CD4-positive, alpha-beta memory T cell (primary cell): ENCODE measurements at regions of chr11 and their contacts with region 1.

Region 1: DNA sequence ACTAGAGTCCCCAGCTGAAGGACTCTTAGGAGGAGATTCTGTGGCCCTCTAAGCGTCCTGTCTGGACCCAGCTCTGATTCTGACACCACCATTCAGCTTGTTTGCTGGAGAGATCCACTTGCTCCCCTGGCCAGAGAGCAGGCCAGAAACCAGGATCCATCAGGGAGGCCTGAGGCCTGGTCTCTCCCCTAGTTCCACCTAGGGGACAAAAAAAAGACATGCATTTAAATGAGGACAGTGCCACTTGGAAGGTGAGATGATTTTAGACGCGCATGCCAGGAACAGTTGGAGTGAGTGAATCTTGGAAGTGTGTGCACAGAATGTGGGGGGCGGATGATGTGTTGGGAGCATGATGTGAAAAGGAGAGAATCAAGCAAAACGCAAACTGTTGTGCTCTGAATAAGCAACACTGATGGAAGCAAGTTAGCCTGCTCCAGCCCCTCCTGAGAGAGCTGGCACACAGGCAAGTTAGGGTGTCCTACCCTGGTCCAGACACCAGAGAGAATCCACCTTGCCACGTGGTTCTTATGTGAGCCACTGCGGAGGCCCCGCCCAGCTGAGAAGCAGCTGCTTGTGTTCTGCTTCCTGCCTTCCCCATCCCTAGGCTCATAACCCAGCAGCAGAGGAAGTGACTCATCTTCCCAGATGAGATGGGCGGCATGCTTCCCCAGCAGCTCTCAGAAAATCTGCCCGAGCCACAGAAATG is 8.0 kb upstream of the SLCO2B1 start:
- DNase-seq: peak; percentile 44 to 88 (median 57)
- H3K4me3 ChIP-seq: no peak overlapping the region
- H3K4me3 Mint-ChIP-seq: peak overlapping the region in 7 of 8 donors; percentile 58 to 75 (median 73)
- H3K27ac ChIP-seq: peak overlapping the region; percentile 22
- H3K27ac Mint-ChIP-seq: peak overlapping the region; percentile 45 to 93 (median 89)
- H3K4me1 ChIP-seq: peaks cover 37% of the 10 kb centered on the region
- H3K4me1 Mint-ChIP-seq: peaks cover 25 to 40% (median 34%) of the 10 kb centered on the region in 4 donors
- H3K27me3 ChIP-seq: no peaks in the 10 kb centered on the region
- H3K27me3 Mint-ChIP-seq: peaks cover 0 to 1% of the 10 kb centered on the region in 2 donors

Region 2: GRCh38 chr11:75022759-75023396 is 120.0 kb before region 1 on chr11:
- CTCF ChIA-PET with region 1: interaction called, 9 read pairs
- POLR2A ChIA-PET with region 1: no interaction called
- intact Hi-C with region 1: loop called (anchors 1 kb)
- DNase-seq: peak; percentile 59 to 69 (median 62)
- H3K4me3 ChIP-seq: no peak overlapping the region
- H3K4me3 Mint-ChIP-seq: no peak overlapping the region
- H3K27ac ChIP-seq: no peak overlapping the region
- H3K27ac Mint-ChIP-seq: peak overlapping the region in 1 of 7 donors; percentile 10
- H3K4me1 ChIP-seq: no peaks in the 10 kb centered on the region
- H3K4me1 Mint-ChIP-seq: no peaks in the 10 kb centered on the region
- H3K27me3 ChIP-seq: no peaks in the 10 kb centered on the region
- H3K27me3 Mint-ChIP-seq: peaks cover 0 to 1% of the 10 kb centered on the region in 2 donors

Region 3: DNA sequence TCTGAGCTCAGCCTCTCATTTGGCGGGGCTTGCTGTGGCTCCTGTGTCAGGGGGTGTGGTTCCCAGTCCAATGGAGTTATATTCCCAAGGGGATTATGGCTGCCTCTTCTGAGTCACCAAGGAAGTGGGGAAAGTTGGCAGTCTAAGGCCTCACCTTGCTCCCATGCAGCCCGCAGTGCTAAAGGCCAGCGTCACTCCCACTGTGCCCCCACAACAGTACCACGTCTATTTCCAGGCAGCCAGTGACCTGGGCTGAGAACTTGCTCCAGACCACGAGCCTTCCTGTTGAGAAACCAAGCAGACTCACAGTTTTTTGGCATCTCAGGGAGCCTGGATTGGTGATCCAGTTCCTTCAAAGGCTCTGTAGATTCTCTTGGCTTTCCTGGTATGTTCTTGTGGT is 91.8 kb before region 1 on chr11:
- CTCF ChIA-PET with region 1: no interaction called
- POLR2A ChIA-PET with region 1: no interaction called
- intact Hi-C with region 1: no loop called
- DNase-seq: no peak
- H3K4me3 ChIP-seq: no peak overlapping the region
- H3K4me3 Mint-ChIP-seq: no peak overlapping the region
- H3K27ac ChIP-seq: no peak overlapping the region
- H3K27ac Mint-ChIP-seq: no peak overlapping the region
- H3K4me1 ChIP-seq: no peaks in the 10 kb centered on the region
- H3K4me1 Mint-ChIP-seq: no peaks in the 10 kb centered on the region
- H3K27me3 ChIP-seq: no peaks in the 10 kb centered on the region
- H3K27me3 Mint-ChIP-seq: peaks cover 3 to 8% of the 10 kb centered on the region in 2 donors

Region 4: GRCh38 chr11:75078233-75078632 is 64.6 kb before region 1 on chr11:
- CTCF ChIA-PET with region 1: no interaction called
- POLR2A ChIA-PET with region 1: no interaction called
- intact Hi-C with region 1: no loop called
- DNase-seq: no peak
- H3K4me3 ChIP-seq: no peak overlapping the region
- H3K4me3 Mint-ChIP-seq: no peak overlapping the region
- H3K27ac ChIP-seq: no peak overlapping the region
- H3K27ac Mint-ChIP-seq: no peak overlapping the region
- H3K4me1 ChIP-seq: no peaks in the 10 kb centered on the region
- H3K4me1 Mint-ChIP-seq: no peaks in the 10 kb centered on the region
- H3K27me3 ChIP-seq: no peaks in the 10 kb centered on the region
- H3K27me3 Mint-ChIP-seq: peaks cover 16 to 32% of the 10 kb centered on the region in 2 donors

Region 5: GRCh38 chr11:75195121-75195551 is 52.3 kb after region 1 on chr11:
- CTCF ChIA-PET with region 1: interaction called, 560 read pairs
- POLR2A ChIA-PET with region 1: no interaction called
- intact Hi-C with region 1: no loop called
- DNase-seq: no peak
- H3K4me3 ChIP-seq: no peak overlapping the region
- H3K4me3 Mint-ChIP-seq: no peak overlapping the region
- H3K27ac ChIP-seq: no peak overlapping the region
- H3K27ac Mint-ChIP-seq: no peak overlapping the region
- H3K4me1 ChIP-seq: no peaks in the 10 kb centered on the region
- H3K4me1 Mint-ChIP-seq: no peaks in the 10 kb centered on the region
- H3K27me3 ChIP-seq: no peaks in the 10 kb centered on the region
- H3K27me3 Mint-ChIP-seq: peaks cover 0 to 1% of the 10 kb centered on the region in 2 donors

Region 6: DNA sequence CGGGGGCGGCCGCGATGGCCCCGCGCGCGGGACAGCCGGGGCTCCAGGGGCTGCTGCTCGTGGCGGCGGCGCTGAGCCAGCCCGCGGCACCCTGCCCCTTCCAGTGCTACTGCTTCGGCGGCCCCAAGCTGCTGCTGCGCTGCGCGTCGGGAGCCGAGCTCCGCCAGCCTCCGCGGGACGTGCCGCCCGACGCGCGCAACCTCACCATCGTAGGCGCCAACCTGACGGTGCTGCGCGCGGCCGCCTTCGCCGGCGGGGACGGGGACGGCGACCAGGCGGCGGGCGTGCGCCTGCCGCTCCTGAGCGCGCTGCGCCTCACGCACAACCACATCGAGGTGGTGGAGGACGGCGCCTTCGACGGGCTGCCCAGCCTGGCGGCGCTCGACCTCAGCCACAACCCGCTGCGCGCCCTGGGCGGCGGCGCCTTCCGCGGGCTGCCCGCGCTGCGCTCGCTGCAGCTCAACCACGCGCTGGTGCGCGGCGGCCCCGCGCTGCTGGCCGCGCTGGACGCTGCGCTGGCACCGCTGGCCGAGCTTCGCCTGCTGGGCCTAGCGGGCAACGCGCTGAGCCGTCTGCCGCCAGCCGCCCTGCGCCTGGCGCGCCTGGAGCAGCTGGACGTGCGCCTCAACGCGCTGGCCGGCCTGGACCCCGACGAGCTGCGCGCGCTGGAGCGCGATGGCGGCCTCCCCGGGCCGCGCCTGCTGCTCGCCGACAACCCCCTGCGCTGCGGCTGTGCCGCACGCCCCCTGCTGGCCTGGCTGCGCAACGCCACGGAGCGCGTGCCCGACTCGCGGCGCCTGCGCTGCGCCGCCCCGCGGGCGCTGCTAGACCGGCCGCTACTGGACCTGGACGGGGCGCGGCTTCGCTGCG is 98.4 kb after region 1 on chr11:
- CTCF ChIA-PET with region 1: interaction called, 567 read pairs
- POLR2A ChIA-PET with region 1: interaction called, 25 read pairs
- intact Hi-C with region 1: loop called (anchors 1 kb)
- DNase-seq: peak; percentile 76 to 90 (median 86)
- H3K4me3 ChIP-seq: peak overlapping the region in 1 of 2 donors; percentile 47
- H3K4me3 Mint-ChIP-seq: peak overlapping the region in 7 of 8 donors; percentile 67 to 82 (median 73)
- H3K27ac ChIP-seq: no peak overlapping the region
- H3K27ac Mint-ChIP-seq: peak overlapping the region in 1 of 7 donors; percentile 87
- H3K4me1 ChIP-seq: peaks cover 14% of the 10 kb centered on the region
- H3K4me1 Mint-ChIP-seq: peaks cover 1 to 16% (median 5%) of the 10 kb centered on the region in 4 donors
- H3K27me3 ChIP-seq: peaks cover 16% of the 10 kb centered on the region
- H3K27me3 Mint-ChIP-seq: peaks cover 24 to 27% of the 10 kb centered on the region in 2 donors

Region 7: DNA sequence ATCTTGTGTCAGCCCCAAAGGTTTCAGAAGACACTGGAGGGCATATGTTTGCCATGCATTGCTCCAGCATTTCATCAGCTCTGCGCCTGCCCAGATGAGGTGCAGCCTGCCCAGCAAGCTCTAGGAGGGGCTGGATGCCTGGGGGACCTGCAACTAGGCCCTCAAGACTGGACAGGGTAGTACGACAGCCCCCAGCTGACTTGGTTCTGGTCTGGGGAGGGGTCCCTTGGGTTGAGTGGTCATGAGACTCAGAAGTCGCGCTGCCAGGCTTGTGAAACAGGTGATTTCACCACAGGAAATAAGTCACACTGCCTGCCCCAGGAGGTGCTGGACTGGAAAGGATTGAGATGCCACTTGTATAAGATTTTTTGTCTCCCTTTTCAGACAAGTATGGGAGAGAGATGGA is 121.1 kb after region 1 on chr11:
- CTCF ChIA-PET with region 1: interaction called, 304 read pairs
- POLR2A ChIA-PET with region 1: interaction called, 4 read pairs
- intact Hi-C with region 1: no loop called
- DNase-seq: peak in 1 of 5 donors; percentile 40
- H3K4me3 ChIP-seq: no peak overlapping the region
- H3K4me3 Mint-ChIP-seq: peak overlapping the region in 1 of 8 donors; percentile 11
- H3K27ac ChIP-seq: no peak overlapping the region
- H3K27ac Mint-ChIP-seq: peak overlapping the region; percentile 2 to 75 (median 50)
- H3K4me1 ChIP-seq: peaks cover 39% of the 10 kb centered on the region
- H3K4me1 Mint-ChIP-seq: peaks cover 26 to 60% (median 40%) of the 10 kb centered on the region in 4 donors
- H3K27me3 ChIP-seq: no peaks in the 10 kb centered on the region
- H3K27me3 Mint-ChIP-seq: no peaks in the 10 kb centered on the region